ENCODE measurements at regions of chr11 and their contacts with region 1.

Region 1: GRCh38 chr11:47407746-47408590 is at the start of gene SLC39A13:
- DNase-seq: peak; percentile 99
- H3K4me3 ChIP-seq: peak within 1 kb of the TSS; percentile 64 to 99
- H3K27ac ChIP-seq: peak within 1 kb of the TSS; percentile 95 to 97
- H3K4me1 ChIP-seq: peaks cover 21 to 40% of the 10 kb centered on the region in 2 experiments; a peak in 2 of 4 replicates
- H3K27me3 ChIP-seq: no peaks in the 10 kb centered on the region
- CTCF ChIP-seq: peak; percentile 80
- EP300 ChIP-seq: peak; percentile 44 to 48; a peak in 2 of 4 replicates
- RAD21 ChIP-seq: peak; percentile 78
- polyA plus RNA-seq, gene SLC39A13: 65.5 and 70.7 TPM in 2 replicates

Region 2: GRCh38 chr11:47340980-47341775 is 66.8 kb before region 1 on chr11:
- CTCF ChIA-PET with region 1: no interaction called
- POLR2A ChIA-PET with region 1: no interaction called
- DNase-seq: no peak
- H3K4me3 ChIP-seq: no peak overlapping the region
- H3K27ac ChIP-seq: no peak overlapping the region
- H3K4me1 ChIP-seq: no peaks in the 10 kb centered on the region
- H3K27me3 ChIP-seq: no peaks in the 10 kb centered on the region
- CTCF ChIP-seq: no peak
- EP300 ChIP-seq: no peak
- RAD21 ChIP-seq: no peak

Region 3: GRCh38 chr11:47394322-47395222 is 13.4 kb before region 1 on chr11:
- CTCF ChIA-PET with region 1: interaction called, 22 read pairs
- POLR2A ChIA-PET with region 1: no interaction called
- DNase-seq: no peak
- H3K4me3 ChIP-seq: no peak overlapping the region
- H3K27ac ChIP-seq: no peak overlapping the region
- H3K4me1 ChIP-seq: peaks cover 3 to 6% of the 10 kb centered on the region in 2 experiments; a peak in 2 of 4 replicates
- H3K27me3 ChIP-seq: no peaks in the 10 kb centered on the region
- CTCF ChIP-seq: no peak
- EP300 ChIP-seq: no peak
- RAD21 ChIP-seq: no peak

Region 4: DNA sequence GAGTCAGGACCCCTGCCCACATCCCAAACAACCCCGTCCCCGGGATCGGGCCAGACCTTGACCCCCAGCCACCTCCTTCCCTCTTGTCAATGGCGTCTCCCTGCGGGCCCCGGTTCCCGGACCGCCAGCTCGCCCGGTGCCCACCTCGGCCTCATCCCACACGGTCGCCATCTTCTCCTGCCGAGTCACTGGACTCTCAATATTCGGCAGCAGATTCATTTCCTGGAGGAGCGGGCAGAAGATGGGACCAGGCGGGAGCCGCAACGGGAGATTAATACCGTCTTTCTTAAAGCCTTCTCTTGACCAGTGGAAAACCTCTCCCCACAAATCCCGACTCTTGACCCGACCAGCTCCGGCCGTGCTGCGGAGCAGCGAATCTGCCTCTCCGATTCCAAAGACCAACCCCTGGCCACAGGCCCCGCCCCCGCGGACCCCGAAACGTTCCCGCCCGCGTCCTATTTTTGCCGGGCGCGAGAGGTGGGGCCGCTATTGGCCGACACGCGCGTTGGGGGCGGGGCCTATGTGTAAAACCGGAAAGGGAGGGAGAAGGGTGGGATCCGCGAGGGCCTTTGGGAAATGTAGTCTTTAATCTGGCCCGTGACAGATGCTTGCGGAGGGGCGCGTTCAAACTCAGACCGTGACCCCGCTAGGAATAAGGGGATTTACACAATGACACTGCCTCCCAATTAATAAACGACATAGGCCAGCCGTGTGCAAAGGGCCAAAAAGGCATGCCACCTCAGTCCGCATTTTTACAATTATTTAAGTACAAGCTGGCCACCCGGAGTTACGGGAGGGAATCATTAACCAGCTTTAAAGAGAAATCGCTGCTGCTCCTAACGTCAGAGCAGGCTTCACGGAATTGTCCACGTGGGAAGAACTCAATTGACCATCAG is 18.3 kb after region 1 on chr11 and contains the start of gene PSMC3:
- CTCF ChIA-PET with region 1: interaction called, 47 read pairs
- POLR2A ChIA-PET with region 1: no interaction called
- DNase-seq: peak; percentile 97
- H3K4me3 ChIP-seq: peak within 1 kb of the TSS; percentile 64 to 85
- H3K27ac ChIP-seq: peak within 1 kb of the TSS; percentile 82 to 91
- H3K4me1 ChIP-seq: peaks cover 9 to 10% of the 10 kb centered on the region in 2 experiments; a peak in 3 of 4 replicates
- H3K27me3 ChIP-seq: no peaks in the 10 kb centered on the region
- CTCF ChIP-seq: no peak
- EP300 ChIP-seq: peak; percentile 58 to 95; a peak in 3 of 4 replicates
- RAD21 ChIP-seq: no peak
- polyA plus RNA-seq, gene PSMC3: 184 and 191 TPM in 2 replicates